Cardiac septum (tissue), 1 donor: ENCODE measurements at regions of chr2 and their contacts with region 1.

Region 1: DNA sequence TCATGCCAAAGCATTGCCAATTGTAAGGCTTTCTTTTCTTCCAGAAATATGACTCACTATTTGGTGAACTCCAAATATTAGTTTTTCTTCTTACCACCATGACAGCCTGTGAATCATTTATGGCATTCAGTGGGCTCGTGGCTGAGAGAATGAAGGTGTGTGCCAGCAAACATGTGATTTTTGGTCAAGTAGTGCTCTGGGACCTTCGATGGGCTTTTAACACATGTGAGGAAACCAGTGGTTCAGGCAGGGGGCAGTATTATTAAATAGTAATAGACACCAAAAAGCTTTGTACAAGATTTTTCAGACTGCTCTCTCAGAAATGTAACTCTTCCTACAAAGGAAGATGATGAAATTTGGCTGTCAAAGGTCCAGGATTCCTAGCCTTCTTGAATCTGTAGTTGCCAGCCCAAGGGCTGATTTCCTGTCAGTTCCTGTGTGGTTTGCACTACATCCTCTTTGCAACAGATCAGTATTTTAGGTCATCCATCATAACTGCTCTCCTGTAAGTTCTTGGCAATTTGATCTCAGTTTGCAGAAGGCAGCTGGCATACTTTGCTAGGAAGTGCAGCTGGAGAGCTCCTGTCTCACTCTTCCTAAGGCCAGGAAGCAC is 64.3 kb downstream of the BABAM2 start:
- DNase-seq: no peak

Region 2: DNA sequence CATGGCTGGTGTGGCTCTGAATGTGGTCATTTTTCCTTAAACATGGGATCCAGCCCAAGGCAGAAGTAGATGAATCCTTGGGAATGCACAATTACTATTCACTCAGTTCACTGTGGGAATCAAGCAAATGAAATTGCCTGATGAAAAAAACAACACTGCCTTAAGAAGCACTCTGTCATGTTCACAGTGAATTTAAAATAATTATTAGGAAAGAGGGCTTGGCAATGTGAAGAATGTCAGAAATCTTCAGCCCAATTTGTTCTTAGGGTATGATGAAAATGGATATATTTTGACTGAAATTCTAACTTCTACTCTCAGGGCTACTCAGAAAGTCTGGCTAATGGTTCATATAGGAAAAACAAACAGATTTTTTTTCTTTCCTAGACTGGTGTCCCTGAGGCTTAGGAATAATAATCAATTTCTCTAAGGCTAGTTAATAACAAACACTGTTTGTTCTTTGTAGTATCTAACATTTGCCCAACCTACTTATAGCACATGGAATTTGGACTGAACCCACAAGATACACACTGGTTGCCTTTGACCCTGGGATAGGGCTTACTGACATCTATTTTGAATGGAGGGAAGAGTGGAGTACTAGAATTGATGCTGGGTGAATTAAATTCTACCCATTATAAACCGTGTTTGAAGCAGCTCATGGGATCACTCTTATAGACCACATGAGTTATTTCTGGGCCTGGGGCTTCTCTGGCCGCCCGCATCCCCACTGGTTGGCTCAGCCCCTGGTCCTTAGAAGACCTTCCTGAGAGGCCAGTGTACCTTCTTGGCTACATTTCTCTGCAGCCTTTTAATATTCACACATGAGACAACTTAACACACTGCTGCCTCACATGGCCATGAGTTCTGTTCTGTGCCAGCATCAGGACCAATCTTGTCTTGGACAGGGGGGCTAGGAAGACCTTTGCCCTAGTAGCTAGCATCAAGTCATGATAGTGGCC is 191.6 kb before region 1 on chr2:
- intact Hi-C with region 1: loop called (anchors 5 kb)
- DNase-seq: no peak

Region 3: GRCh38 chr2:27890146-27890923 is 64.5 kb before region 1 on chr2 and contains the starts of genes BABAM2 and RBKS:
- intact Hi-C with region 1: loop called (anchors 5 kb)
- DNase-seq: peak; percentile 95
- total RNA-seq, gene BABAM2: 63.4 TPM
- total RNA-seq, gene RBKS: 3.9 TPM

Region 4: DNA sequence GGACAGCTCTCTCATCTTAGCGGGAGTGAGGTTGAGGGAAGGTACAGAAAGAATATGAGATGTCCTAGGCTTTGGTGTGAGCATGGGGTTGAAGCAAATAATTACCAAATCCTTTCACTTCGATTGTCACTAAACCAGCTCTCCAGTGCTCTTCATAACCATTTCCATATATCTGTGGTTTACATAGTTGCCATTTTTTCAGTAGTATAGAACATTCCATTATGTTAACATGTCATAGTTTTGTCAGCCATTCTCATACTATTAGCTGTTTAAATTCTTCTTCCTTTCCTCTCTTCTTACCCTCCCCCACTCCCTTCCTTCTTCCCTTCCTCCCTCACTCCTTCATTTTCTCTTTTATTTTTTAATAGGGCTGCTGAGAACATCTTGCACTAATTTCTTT is 141.5 kb after region 1 on chr2:
- intact Hi-C with region 1: loop called (anchors 5 kb)
- DNase-seq: no peak

Region 5: DNA sequence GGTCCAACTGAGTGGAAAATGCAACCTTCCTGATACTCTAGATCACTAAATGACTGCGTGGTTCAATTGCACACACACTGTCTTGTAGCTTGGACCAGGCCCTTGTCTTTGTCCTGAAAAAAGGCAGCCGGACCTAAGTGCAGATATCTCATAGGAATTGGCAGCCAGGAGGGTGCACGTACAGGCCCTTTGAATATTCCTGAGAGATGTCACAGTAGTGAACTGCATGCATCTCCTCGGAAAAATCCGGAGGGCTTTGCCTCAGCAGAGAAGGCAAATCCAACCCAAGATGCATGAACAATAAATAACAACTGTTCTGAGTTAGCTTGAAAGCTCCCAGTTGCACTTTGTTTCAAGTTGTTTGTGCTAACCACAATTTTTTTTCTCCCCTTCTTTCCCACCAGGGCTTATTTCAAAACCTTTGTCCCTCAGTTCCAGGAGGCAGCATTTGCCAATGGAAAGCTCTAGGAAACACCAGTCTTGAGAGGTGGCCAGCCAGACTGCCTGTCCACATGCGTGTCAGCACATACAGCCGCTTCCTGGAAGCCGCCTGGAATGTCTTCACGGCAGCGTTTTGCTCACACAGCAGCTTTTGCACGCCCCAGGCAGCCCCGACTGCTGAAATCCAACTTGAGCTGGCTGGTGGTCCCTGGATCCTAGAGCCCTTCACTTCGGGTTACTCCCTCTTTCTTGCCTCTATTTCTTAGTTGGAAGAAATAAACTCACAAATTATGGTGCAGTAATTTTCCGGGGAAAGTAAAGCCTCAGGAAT is 383.4 kb after region 1 on chr2:
- intact Hi-C with region 1: loop called (anchors 5 kb)
- DNase-seq: no peak